ENCODE measurements at regions of chr1 and their contacts with region 1.

Region 1: DNA sequence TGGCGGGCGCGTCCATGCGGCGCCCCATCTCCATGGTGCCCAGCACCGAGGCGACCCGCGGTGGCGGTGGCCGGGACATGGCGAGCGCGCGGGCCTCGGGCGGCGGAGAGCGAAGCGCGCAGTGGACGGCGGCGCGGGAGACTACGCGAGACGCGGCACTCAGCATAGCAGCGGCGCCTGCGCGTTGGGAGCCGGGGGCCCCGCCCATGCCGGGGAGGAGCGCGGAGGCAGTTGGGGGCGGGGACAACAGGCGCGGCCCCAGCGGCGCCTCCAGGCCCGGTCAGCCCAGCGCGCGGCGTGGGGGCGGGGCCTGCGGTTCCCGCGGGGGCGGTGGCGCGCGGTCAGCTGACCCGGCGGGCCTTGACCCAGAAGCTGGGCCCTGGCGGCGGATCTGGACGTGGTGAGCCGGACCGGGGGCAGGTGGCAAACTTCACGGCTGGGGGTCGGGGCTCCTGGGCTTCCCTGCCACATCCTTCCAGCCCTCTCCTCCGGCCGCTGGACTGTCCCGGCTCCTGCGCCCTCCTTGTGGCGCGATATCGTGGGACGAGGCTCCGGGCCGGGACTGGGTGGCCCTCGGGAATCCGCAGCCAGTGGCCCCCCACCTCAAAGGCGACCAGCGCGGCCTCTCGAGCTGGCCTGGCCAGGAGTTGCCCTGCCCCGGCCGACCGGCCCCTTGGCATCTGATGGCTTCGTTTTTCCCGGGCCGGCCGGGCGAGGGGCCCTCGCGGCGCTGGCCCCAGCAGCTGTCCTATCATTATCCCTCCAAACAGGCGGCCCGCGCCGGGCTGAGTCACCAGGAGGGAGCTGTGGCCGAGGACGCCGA is at the starts of genes AKR7A2 and SLC66A1:
- DNase-seq: peak; percentile 95
- ATAC-seq: peak; percentile 97
- H3K4me3 Mint-ChIP-seq: peak within 1 kb of the TSS; percentile 78
- H3K27ac Mint-ChIP-seq: peak within 1 kb of the TSS; percentile 61
- H3K4me1 Mint-ChIP-seq: peaks cover 23% of the 10 kb centered on the region
- H3K27me3 Mint-ChIP-seq: no peaks in the 10 kb centered on the region
- total RNA-seq, gene AKR7A2: 41.3 to 43.0 TPM
- total RNA-seq, gene SLC66A1: 5.9 to 6.5 TPM

Region 2: DNA sequence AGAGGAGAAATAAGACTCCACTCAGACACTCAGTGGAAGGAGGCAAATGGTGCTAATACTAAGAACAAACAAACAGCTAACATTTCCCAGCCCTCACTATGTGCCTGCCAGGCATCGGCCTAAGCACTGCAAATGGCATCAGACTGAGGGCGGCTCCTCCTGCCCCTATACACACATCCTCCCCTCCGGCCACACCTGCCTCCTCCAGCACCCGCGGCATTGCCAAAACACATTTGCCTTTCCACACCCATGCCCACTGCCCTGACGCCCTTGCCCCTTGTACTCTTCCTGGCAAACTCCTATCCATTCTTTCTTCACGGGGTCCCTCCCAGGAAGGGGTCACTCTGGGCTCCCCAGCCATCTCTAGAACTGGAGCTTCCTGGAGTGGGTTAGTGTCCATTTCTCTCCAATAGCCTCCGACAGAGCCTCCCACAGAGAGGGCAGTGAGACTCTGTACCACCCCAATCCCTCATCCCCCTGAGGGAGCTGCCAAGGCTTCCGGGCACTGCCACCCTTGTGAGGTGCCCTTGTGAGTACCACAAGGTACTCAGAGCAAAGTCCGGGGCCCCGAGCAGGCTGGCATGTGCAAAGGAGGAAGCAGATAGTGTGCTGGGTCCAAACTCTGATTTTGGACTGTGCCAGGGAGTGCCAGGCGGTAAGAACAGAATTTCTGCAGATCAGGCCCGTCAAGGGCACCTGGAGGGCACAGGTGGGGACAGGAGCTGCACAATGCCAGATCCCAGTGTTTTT is 24.6 kb before region 1 on chr1:
- CTCF ChIA-PET with region 1: no interaction called
- POLR2A ChIA-PET with region 1: no interaction called
- intact Hi-C with region 1: loop called in 1 of 2 experiments (anchors 1 kb)
- DNase-seq: no peak
- ATAC-seq: no peak
- H3K4me3 Mint-ChIP-seq: peak overlapping the region; percentile 36
- H3K27ac Mint-ChIP-seq: no peak overlapping the region
- H3K4me1 Mint-ChIP-seq: peaks cover 7% of the 10 kb centered on the region
- H3K27me3 Mint-ChIP-seq: peaks cover 15% of the 10 kb centered on the region

Region 3: DNA sequence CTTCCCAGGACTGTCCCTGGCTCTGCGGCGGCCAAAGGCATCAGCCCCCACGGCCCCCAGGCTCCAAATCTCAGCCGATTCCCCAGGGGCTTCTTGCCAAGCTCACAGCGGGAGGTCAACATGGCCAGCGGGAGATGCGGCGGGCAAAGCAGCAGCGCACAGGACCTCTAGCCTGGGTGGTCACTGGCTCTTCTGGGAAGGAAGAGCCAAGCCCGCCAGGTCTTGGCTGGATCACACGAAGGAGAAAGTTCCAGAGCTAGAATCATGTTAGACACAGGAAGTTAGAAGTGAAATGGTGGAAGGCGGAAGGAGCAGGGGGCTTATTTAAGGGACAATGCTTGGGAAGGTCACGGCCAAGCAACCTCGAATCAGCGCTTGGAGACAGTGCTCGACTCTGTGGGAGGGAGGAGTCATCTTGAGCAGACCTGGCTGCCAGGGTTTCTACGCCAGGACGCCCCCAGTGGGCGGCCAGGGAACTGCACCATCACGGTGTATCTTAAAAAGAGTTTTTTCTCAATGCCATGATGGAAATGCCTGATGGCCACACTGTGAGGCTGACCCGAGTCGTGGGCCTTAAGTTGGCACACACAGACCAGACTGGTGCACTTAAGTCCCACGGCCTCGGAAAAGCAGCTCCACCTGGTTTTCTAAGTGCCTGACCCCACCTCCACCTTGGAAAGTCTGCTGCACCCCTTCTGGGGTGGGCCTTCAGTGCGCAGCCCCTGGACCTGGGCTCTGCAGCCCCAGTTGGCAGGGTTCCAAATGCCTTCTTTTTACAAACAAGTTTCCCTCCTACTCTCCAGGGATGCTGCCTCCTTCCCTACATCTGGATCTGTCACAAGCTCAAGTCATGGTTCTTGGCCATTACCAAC is 29.3 kb after region 1 on chr1:
- CTCF ChIA-PET with region 1: no interaction called
- POLR2A ChIA-PET with region 1: interaction called, 3 read pairs
- intact Hi-C with region 1: loop called in 1 of 2 experiments (anchors 2 kb)
- DNase-seq: peak; percentile 89
- ATAC-seq: peak; percentile 76
- H3K4me3 Mint-ChIP-seq: no peak overlapping the region
- H3K27ac Mint-ChIP-seq: no peak overlapping the region
- H3K4me1 Mint-ChIP-seq: peaks cover 23% of the 10 kb centered on the region
- H3K27me3 Mint-ChIP-seq: no peaks in the 10 kb centered on the region

Region 4: DNA sequence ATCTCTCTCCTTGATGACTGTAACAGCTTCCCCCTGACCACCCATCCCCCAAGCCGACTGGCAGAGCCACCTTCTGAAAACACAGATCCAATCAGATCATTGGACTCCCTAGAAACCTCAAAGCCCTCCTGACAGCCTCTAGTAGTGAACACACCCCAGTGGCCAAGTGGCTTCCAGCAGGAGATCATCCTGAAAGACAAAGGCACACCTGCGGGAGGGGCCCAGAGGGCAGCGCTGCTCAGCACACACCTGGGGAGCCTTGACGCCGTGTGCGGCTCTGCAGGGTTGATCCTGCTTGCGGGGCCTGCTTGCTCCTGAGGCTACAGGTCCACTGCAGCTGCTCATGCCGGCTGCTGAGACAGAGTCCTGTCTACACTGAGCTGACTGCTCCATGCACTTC is 41.4 kb after region 1 on chr1:
- CTCF ChIA-PET with region 1: no interaction called
- POLR2A ChIA-PET with region 1: no interaction called
- intact Hi-C with region 1: no loop called
- DNase-seq: no peak
- ATAC-seq: no peak
- H3K4me3 Mint-ChIP-seq: no peak overlapping the region
- H3K27ac Mint-ChIP-seq: no peak overlapping the region
- H3K4me1 Mint-ChIP-seq: no peaks in the 10 kb centered on the region
- H3K27me3 Mint-ChIP-seq: no peaks in the 10 kb centered on the region